ENCODE measurements at regions of chr7 and their contacts with region 1.

Region 1: DNA sequence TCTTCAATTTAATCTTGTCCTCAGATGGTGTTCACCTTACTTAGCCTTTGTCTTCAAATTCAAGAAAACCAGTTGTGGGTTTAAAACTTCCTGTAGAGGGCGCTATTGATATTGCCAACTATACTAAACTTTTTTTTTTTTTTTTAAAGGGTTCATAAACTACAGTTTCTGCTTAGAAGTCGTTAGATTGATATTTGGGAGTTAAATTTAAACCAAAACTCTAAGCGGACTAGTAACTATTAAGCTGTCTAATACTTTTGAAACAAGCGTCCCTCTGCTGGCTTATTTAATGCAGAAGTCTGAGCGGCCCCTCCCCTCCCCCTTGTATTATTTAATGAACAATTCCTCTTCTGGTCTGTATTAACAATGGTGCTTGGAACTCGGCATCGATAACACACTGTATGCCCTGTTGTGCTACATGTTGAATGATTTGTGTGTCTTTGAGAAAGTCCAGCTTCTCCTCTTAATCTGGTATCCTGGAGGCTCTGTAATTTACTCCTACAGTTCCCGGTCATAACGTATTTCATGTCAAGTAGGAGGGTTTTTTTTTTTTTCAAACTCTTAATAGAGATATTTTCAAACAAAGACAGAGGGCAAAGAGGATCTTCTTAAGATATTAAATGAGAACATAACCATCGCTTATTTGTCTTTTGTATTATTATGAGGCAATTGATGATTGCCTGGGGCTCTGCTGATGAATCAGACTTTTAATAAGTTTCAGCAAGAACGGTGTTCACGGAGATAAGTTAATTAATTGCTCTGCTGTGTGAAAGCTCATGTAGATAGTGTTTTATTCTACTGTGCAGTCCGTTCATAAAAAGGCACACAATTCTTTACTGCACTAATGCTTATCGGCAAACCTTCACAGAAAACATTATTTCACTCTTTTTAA is 22.6 kb upstream of the CREB5 start:
- DNase-seq: no peak
- H3K4me3 Mint-ChIP-seq: no peak overlapping the region
- H3K27ac Mint-ChIP-seq: no peak overlapping the region
- H3K4me1 Mint-ChIP-seq: no peaks in the 10 kb centered on the region
- H3K27me3 Mint-ChIP-seq: peaks cover 30% of the 10 kb centered on the region

Region 2: DNA sequence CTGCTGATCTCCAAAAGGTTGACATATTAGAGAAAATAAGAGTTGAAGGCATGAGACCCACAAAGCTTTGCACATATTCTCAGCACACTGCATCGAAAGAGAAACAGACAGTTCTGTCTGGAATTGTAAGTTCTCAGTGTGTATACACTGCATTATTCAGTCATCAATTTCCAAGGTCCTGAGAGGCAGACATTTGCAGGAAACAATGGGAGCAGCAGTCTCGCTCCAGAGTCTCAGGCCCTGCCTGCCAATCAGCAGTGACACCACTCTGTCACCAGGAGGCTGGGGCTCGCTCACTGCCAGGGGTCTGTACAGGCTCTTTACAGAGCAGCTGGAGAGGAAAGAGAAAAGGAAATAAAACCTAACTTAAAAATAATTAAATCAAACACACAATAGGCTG is 245.5 kb before region 1 on chr7:
- intact Hi-C with region 1: no loop called
- DNase-seq: no peak
- H3K4me3 Mint-ChIP-seq: no peak overlapping the region
- H3K27ac Mint-ChIP-seq: no peak overlapping the region
- H3K4me1 Mint-ChIP-seq: peaks cover 1% of the 10 kb centered on the region
- H3K27me3 Mint-ChIP-seq: peaks cover 4% of the 10 kb centered on the region

Region 3: GRCh38 chr7:28626624-28627262 is 237.0 kb after region 1 on chr7:
- intact Hi-C with region 1: loop called (anchors 2 kb)
- DNase-seq: peak; percentile 61
- H3K4me3 Mint-ChIP-seq: no peak overlapping the region
- H3K27ac Mint-ChIP-seq: no peak overlapping the region
- H3K4me1 Mint-ChIP-seq: no peaks in the 10 kb centered on the region
- H3K27me3 Mint-ChIP-seq: no peaks in the 10 kb centered on the region

Region 4: DNA sequence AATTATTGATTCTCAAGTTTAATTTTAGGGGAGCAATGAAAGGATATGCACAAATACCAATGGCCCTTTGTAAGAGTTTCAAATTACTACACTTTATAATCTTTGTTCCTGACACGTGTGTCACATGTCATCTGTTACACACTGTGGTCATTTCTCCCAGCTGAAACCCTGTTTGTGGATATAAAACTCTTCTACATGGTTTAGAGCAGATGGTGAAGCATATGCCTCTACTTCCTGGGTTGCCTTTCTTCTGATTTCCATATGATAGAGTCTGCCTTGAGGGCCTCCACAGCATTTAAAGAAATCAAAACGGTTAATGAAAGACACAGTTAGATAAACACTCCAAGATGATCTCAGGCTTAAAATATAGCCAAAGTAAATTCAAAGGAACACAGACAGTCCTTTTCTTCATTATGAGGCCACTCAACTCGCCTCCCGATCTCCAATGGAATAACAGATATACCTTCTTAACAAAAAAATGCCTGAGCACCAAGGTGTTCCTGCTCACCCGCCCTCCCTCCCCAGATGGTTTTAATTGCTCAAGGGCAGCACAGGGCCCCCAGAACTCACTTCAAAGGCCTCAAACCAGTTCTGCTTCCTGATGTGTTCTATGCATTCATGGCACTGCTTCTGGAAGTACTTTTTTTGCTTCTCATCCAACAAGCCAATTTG is 681.6 kb after region 1 on chr7:
- intact Hi-C with region 1: no loop called
- DNase-seq: no peak
- H3K4me3 Mint-ChIP-seq: no peak overlapping the region
- H3K27ac Mint-ChIP-seq: no peak overlapping the region
- H3K4me1 Mint-ChIP-seq: no peaks in the 10 kb centered on the region
- H3K27me3 Mint-ChIP-seq: peaks cover 2% of the 10 kb centered on the region

Measured in activated CD4-positive, alpha-beta T cell treated with anti-CD3 and anti-CD28 coated beads, Interleukin-2, amount 10 ng/mL, durations not matched to agents 24 days and 14 days (primary cell).